Heart left ventricle (tissue), 16 donors: ENCODE measurements at regions of chr6 and their contacts with region 1.

Region 1: DNA sequence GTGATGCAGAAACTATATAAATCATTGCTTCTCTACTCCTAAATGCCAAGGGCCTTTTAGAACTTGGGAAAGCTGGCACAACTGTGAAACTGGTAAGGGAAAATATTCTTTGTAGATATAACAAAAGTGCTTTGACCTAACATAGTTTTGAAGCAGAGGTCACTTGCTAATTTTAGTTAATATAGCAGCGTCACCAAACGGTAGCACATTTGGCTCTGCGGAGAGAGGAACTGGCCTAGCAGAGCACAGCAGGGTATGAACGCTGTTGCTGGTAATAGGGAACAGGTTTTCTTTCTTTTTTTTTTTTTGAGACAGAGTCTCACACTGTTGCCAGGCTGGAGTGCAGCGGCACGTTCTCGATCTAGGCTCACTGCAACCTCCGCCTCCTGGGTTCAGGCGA is 67.4 kb downstream of the ECT2L start:
- DNase-seq: peak in 4 of 5 donors; percentile 13 to 66 (median 54)
- ATAC-seq: peak; percentile 82 to 94 (median 90)
- H3K4me3 ChIP-seq: no peak overlapping the region
- H3K27ac ChIP-seq: peak overlapping the region; percentile 63 to 96 (median 82)
- H3K4me1 ChIP-seq: peaks cover 0 to 31% (median 3%) of the 10 kb centered on the region in 12 donors
- H3K27me3 ChIP-seq: no peaks in the 10 kb centered on the region
- CTCF ChIP-seq: no peak
- POLR2A ChIP-seq: no peak

Region 2: GRCh38 chr6:138844192-138844591 is 19.1 kb before region 1 on chr6:
- intact Hi-C with region 1: loop called in 1 of 10 experiments (anchors 2 kb)
- DNase-seq: peak in 4 of 5 donors; percentile 49 to 77 (median 69)
- ATAC-seq: peak; percentile 96 to 98 (median 97)
- H3K4me3 ChIP-seq: peak overlapping the region in 1 of 12 donors; percentile 13
- H3K27ac ChIP-seq: peak overlapping the region; percentile 19 to 90 (median 75)
- H3K4me1 ChIP-seq: peaks cover 0 to 23% (median 9%) of the 10 kb centered on the region in 12 donors
- H3K27me3 ChIP-seq: no peaks in the 10 kb centered on the region
- CTCF ChIP-seq: no peak
- POLR2A ChIP-seq: no peak